ENCODE measurements at regions of chr5 and their contacts with region 1.

Region 1: GRCh38 chr5:173293817-173294672 is 34.2 kb downstream of the STC2 start:
- DNase-seq: peak; percentile 83
- H3K4me3 ChIP-seq: no peak overlapping the region
- H3K27ac ChIP-seq: no peak overlapping the region
- H3K4me1 ChIP-seq: peaks cover 14% of the 10 kb centered on the region
- H3K27me3 ChIP-seq: no peaks in the 10 kb centered on the region
- CTCF ChIP-seq: peak; percentile 81

Region 2: GRCh38 chr5:172479044-172479783 is 814.8 kb before region 1 on chr5:
- CTCF ChIA-PET with region 1: no interaction called
- POLR2A ChIA-PET with region 1: no interaction called
- intact Hi-C with region 1: loop called (anchors 5 kb)
- DNase-seq: peak; percentile 87
- H3K4me3 ChIP-seq: no peak overlapping the region
- H3K27ac ChIP-seq: no peak overlapping the region
- H3K4me1 ChIP-seq: no peaks in the 10 kb centered on the region
- H3K27me3 ChIP-seq: no peaks in the 10 kb centered on the region
- CTCF ChIP-seq: peak; percentile 66

Region 3: GRCh38 chr5:173204185-173204979 is 89.7 kb before region 1 on chr5:
- CTCF ChIA-PET with region 1: no interaction called
- POLR2A ChIA-PET with region 1: no interaction called
- intact Hi-C with region 1: no loop called
- DNase-seq: peak; percentile 24
- H3K4me3 ChIP-seq: no peak overlapping the region
- H3K27ac ChIP-seq: no peak overlapping the region
- H3K4me1 ChIP-seq: no peaks in the 10 kb centered on the region
- H3K27me3 ChIP-seq: no peaks in the 10 kb centered on the region
- CTCF ChIP-seq: peak; percentile 59

Region 4: GRCh38 chr5:173331956-173332479 is 38.0 kb after region 1 on chr5:
- CTCF ChIA-PET with region 1: interaction called, 70 read pairs
- POLR2A ChIA-PET with region 1: no interaction called
- intact Hi-C with region 1: loop called (anchors 1 kb)
- DNase-seq: peak; percentile 85
- H3K4me3 ChIP-seq: no peak overlapping the region
- H3K27ac ChIP-seq: no peak overlapping the region
- H3K4me1 ChIP-seq: peaks cover 14% of the 10 kb centered on the region
- H3K27me3 ChIP-seq: no peaks in the 10 kb centered on the region
- CTCF ChIP-seq: peak; percentile 88

Region 5: GRCh38 chr5:173573126-173573960 is 279.3 kb after region 1 on chr5:
- CTCF ChIA-PET with region 1: interaction called, 7 read pairs
- POLR2A ChIA-PET with region 1: no interaction called
- intact Hi-C with region 1: loop called (anchors 1 kb)
- DNase-seq: peak; percentile 65
- H3K4me3 ChIP-seq: no peak overlapping the region
- H3K27ac ChIP-seq: no peak overlapping the region
- H3K4me1 ChIP-seq: no peaks in the 10 kb centered on the region
- H3K27me3 ChIP-seq: no peaks in the 10 kb centered on the region
- CTCF ChIP-seq: peak; percentile 91

Region 6: GRCh38 chr5:174311531-174312269 is 1017.7 kb after region 1 on chr5:
- CTCF ChIA-PET with region 1: no interaction called
- POLR2A ChIA-PET with region 1: no interaction called
- intact Hi-C with region 1: loop called (anchors 10 kb)
- DNase-seq: peak; percentile 69
- H3K4me3 ChIP-seq: peak overlapping the region; percentile 39
- H3K27ac ChIP-seq: no peak overlapping the region
- H3K4me1 ChIP-seq: no peaks in the 10 kb centered on the region
- H3K27me3 ChIP-seq: no peaks in the 10 kb centered on the region
- CTCF ChIP-seq: peak; percentile 70

Measured in A673 (cell line).